Posterior vena cava (tissue), 2 donors: ENCODE measurements at regions of chr7 and their contacts with region 1.

Region 1: GRCh38 chr7:102390697-102391484 is 5.3 kb upstream of the PRKRIP1 start:
- DNase-seq: peak; percentile 93

Region 2: GRCh38 chr7:102284891-102285539 is 105.9 kb before region 1 on chr7:
- intact Hi-C with region 1: loop called (anchors 2 kb)
- DNase-seq: peak; percentile 89

Region 3: GRCh38 chr7:102300643-102301233 is 90.2 kb before region 1 on chr7:
- intact Hi-C with region 1: no loop called
- DNase-seq: no peak

Region 4: GRCh38 chr7:103766660-103767059 is 1375.8 kb after region 1 on chr7:
- intact Hi-C with region 1: no loop called
- DNase-seq: no peak